CD8-positive, alpha-beta memory T cell (primary cell): ENCODE measurements at regions of chr20 and their contacts with region 1.

Region 1: DNA sequence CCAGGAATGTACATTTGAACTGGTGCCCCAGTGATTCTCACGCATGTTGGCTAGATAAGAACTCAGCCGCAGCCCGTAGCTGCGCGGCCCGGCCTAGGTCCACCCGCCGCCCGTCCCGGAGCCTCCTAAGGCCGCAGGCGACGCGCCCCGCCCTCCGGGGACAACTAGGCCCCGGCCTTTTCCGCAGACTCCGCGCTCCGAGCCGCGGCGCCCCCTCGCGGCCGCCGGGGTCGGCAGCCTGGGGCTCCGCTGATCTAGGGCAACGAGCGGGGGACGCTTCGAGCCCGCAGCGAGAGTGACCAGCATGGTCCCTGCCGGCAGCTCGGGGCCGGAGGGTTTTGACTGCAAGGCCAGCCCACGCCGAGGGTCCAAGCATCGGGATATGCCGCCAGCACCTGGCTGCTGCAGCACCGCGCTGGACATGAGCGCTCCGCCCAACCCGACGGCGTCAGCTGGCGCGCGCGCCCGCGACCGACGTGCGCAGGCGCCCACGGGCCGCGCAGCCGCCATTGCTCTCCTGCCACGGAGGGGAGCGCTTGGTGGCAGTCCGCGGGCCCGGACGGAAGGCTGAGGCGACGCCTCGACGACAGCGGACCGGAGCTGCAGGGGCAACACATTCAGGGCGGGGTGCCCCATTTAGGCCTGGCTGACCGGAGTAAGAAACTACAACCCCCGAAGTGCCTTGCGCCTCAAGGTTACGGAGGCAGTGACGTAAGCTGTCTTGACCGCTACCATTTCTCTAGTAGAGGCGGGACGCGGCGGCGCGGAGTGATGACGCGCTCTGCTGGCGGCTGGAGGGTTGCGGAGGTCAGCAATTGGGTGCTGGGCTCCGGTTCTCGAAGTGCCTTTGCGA is at the start of gene AP5S1:
- DNase-seq: peak; percentile 89 to 94 (median 93)
- H3K4me3 ChIP-seq: peak within 1 kb of the TSS; percentile 82
- H3K4me3 Mint-ChIP-seq: peak within 1 kb of the TSS; percentile 87 to 97 (median 94)
- H3K27ac ChIP-seq: peak within 1 kb of the TSS; percentile 94
- H3K27ac Mint-ChIP-seq: peak within 1 kb of the TSS; percentile 96 to 100 (median 97)
- H3K4me1 ChIP-seq: peaks cover 49% of the 10 kb centered on the region
- H3K4me1 Mint-ChIP-seq: peaks cover 45 to 65% (median 57%) of the 10 kb centered on the region in 3 donors
- H3K27me3 ChIP-seq: no peaks in the 10 kb centered on the region
- H3K27me3 Mint-ChIP-seq: no peaks in the 10 kb centered on the region
- total RNA-seq, gene AP5S1: 14.0 to 15.7 TPM

Region 2: DNA sequence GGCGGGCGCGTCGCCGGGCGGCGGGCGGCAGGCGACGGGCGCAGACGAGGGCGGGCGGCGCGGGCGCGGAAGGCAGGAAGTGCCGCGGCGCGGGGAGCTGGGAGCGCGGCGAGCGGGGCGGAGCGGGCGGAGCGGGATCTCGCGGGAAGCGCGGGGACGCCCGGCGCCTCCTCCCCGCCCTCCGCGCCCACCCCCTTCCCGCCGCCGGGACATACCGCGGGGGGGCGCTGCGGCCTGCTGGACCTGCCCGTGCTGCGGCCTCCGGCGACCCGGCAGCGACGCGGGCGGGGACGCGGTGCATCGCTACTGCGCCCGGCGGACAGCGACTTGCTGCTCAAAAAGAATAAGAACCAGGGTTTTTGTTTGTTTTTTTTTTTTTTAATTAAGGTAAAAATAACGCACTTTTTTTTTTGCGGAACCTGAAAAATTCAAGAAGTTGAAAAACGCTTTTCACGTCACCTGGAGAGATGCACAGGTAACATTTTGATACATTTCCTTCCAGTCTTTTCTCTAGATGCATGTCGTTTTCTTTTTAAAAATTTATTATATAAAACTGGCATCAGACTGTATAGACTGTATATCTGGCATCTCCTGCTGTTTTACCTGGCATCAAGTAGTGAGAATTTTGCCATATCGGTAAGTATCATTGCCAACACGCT is 33.5 kb before region 1 on chr20 and contains the start of gene CENPB:
- CTCF ChIA-PET with region 1: interaction called, 262 read pairs
- POLR2A ChIA-PET with region 1: interaction called, 37 read pairs
- DNase-seq: peak; percentile 87 to 92 (median 89)
- H3K4me3 ChIP-seq: peak within 1 kb of the TSS; percentile 46
- H3K4me3 Mint-ChIP-seq: peak within 1 kb of the TSS; percentile 75 to 88 (median 83)
- H3K27ac ChIP-seq: peak within 1 kb of the TSS; percentile 16
- H3K27ac Mint-ChIP-seq: peak within 1 kb of the TSS; percentile 68 to 92 (median 85)
- H3K4me1 ChIP-seq: peaks cover 23% of the 10 kb centered on the region
- H3K4me1 Mint-ChIP-seq: peaks cover 29 to 39% (median 34%) of the 10 kb centered on the region in 3 donors
- H3K27me3 ChIP-seq: no peaks in the 10 kb centered on the region
- H3K27me3 Mint-ChIP-seq: no peaks in the 10 kb centered on the region
- total RNA-seq, gene CENPB: 66.4 to 69.9 TPM

Region 3: DNA sequence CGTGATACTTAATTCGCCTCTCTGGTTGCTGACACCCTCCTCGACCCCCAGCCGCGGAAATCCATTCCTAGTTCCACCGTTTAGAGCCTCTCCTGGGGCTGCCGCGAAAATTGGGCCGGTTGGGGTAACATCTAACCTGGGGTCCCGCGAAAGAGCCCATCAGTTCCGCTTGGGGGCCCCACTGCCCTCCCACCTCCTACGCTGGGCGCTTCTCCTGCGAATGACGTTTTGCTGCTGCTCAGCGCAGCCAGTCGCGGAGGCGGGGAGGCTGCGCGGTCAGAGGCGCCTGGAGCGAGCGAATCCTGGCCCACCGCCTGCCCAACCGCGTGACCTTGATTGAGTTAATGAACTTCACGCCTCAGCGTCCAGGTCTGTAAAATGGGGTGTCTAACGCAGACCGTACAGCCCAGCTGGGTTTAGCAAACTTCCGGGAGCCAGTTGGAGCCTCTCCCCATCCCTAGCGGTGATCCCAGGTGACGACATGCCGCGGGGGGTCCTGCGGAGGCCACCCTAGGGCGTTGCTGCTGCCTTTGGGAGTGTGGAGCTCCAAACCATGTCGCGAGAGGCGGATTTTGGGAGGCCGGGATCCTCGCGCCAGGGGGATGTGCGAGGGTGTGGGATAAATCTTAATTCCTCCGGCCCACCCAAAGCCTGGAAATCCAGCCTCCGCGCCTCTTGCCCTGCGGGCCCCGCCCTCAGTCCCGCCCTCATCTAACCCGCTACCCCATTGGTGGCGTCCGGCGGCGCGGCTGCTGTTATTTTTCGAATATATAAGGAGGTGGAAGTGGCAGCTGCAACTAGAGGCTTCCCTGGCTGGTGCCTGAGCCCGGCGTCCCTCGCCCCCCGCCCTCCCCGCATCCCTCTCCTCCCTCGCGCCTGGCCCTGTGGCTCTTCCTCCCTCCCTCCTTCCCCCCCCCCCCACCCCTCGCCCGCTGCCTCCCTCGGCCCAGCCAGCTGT is 24.5 kb before region 1 on chr20 and contains the start of gene CDC25B:
- CTCF ChIA-PET with region 1: interaction called, 262 read pairs
- POLR2A ChIA-PET with region 1: interaction called, 10 read pairs
- DNase-seq: peak; percentile 81 to 92 (median 88)
- H3K4me3 ChIP-seq: peak within 1 kb of the TSS; percentile 92
- H3K4me3 Mint-ChIP-seq: peak within 1 kb of the TSS; percentile 94 to 100 (median 98)
- H3K27ac ChIP-seq: peak within 1 kb of the TSS; percentile 89
- H3K27ac Mint-ChIP-seq: peak within 1 kb of the TSS; percentile 94 to 99 (median 96)
- H3K4me1 ChIP-seq: peaks cover 38% of the 10 kb centered on the region
- H3K4me1 Mint-ChIP-seq: peaks cover 39 to 47% (median 45%) of the 10 kb centered on the region in 3 donors
- H3K27me3 ChIP-seq: no peaks in the 10 kb centered on the region
- H3K27me3 Mint-ChIP-seq: peaks cover 0 to 3% of the 10 kb centered on the region in 2 donors
- total RNA-seq, gene CDC25B: 78.0 to 81.6 TPM

Region 4: DNA sequence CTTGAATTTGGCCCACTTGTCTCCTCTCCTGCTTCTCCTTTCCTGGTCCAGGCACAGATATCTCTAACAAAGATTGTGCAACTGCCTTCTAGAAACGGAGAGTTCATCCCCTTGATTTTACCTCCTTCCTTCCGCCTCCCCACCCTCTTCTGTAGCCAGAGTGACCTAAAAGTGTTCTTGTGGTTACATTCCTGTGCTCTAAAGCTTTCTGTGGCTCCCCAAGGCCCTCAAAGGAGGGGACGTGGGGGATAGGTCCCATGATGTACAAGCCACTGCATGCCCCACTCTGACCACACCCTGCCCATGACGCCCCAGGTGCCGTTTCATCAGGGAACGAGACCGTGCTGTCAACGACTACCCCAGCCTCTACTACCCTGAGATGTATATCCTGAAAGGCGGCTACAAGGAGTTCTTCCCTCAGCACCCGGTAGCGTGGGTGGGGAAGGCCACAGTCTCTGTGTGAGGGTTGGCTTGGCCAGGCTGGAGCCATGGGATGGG is 16.0 kb before region 1 on chr20:
- CTCF ChIA-PET with region 1: interaction called, 46 read pairs
- POLR2A ChIA-PET with region 1: interaction called, 10 read pairs
- DNase-seq: peak in 1 of 5 donors; percentile 35
- H3K4me3 ChIP-seq: no peak overlapping the region
- H3K4me3 Mint-ChIP-seq: no peak overlapping the region
- H3K27ac ChIP-seq: no peak overlapping the region
- H3K27ac Mint-ChIP-seq: peak overlapping the region in 7 of 8 donors; percentile 43 to 98 (median 83)
- H3K4me1 ChIP-seq: peaks cover 65% of the 10 kb centered on the region
- H3K4me1 Mint-ChIP-seq: peaks cover 65 to 90% (median 70%) of the 10 kb centered on the region in 3 donors
- H3K27me3 ChIP-seq: no peaks in the 10 kb centered on the region
- H3K27me3 Mint-ChIP-seq: no peaks in the 10 kb centered on the region